PC-9 (cell line): ENCODE measurements at regions of chr2 and their contacts with region 1.

Region 1: DNA sequence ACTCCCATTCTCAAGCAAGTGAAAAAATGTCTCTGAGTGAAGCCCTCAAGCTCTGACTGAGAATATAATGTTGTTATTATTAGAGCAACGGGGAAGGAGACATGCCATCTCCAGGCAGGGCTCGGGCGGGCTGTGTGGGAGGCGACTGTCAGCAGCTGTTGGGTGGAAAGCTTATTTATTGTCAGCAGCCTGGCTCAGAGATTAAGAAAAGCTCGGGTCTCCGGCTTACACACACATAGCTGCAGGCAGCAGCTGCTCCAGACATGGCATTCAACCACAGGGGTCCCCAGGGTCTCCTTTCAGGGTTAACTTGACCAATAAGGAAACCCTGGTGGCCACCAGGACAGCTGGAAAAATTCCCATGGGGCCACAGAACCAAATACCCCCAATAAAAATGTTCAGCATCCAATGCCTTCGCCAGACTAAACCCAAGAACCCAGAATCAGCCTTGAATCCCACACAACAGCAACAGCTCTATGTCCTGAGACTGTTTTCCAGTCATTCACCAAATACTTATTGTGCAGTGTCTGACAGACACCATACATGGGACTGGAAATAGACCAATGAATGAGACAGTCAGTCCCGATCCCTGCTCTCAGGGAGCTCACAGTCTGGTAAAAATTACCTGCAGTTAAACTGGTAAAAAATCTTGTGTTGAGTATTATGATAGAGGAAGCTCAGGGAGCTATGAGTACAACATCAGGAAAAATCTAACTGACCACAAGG is 70.5 kb upstream of the RTN4 start:
- DNase-seq: no peak
- H3K4me3 ChIP-seq: no peak overlapping the region
- H3K27ac ChIP-seq: no peak overlapping the region
- H3K4me1 ChIP-seq: peaks cover 40% of the 10 kb centered on the region
- H3K27me3 ChIP-seq: no peaks in the 10 kb centered on the region
- CTCF ChIP-seq: no peak

Region 2: DNA sequence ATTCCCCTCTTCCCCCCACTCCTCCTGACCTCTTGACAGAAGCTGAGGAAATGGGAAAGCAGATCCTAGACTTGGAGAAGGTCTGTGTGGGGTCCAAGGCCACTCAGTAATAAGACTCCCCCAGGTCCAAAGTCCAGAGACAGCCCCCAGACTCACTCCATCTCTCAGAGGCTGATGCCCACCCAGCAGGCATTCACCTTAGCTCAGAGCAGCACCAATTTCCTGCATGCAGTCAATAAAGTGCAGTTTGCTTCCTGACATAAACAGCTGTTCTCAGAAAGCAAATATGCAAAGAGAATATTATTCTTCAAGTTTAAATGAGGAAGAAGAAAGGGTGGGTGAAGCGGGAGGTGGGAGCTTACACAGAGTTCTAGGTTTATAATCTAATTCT is 13.5 kb after region 1 on chr2:
- CTCF ChIA-PET with region 1: interaction called, 13 read pairs
- POLR2A ChIA-PET with region 1: no interaction called
- intact Hi-C with region 1: no loop called
- DNase-seq: no peak
- H3K4me3 ChIP-seq: no peak overlapping the region
- H3K27ac ChIP-seq: no peak overlapping the region
- H3K4me1 ChIP-seq: peaks cover 12% of the 10 kb centered on the region; the same call in 1 of the 2 replicates
- H3K27me3 ChIP-seq: no peaks in the 10 kb centered on the region
- CTCF ChIP-seq: no peak